Activated CD4-positive, alpha-beta memory T cell treated with anti-CD3 and anti-CD28 coated beads for 36 hours (primary cell): ENCODE measurements at regions of chr15 and their contacts with region 1.

Region 1: DNA sequence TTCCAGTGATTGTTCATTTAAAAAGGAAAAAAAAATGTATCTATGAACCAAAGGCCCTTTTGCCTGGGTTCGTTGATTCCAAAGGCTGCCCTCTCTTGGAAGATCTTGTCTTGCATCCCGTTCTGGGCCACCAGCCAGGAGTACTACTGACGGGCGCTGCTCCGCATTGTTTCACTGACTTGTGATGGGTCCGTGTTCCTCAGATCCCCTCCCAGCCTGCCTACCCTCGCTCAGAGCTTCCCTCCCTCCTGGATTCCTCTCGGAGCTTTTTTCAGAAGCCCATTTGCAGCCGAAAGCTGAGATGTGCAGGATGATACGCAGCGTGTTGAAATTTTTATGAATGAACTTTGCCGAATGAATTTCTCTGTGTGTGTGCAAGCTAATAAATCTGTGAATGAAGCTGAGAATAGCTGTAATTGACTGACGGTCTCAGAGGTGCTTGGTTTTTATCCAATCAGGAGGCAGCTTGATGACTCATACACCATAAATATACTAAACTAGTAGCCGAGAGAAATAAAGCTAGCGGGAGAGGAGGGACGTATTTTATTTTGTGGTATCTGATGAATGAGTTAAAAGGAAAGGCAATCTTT is at the start of gene SHC4:
- DNase-seq: no peak
- H3K4me3 Mint-ChIP-seq: peak within 1 kb of the TSS; percentile 61
- H3K27ac Mint-ChIP-seq: no peak within 1 kb of the TSS
- H3K4me1 Mint-ChIP-seq: peaks cover 32% of the 10 kb centered on the region
- H3K27me3 Mint-ChIP-seq: peaks cover 25% of the 10 kb centered on the region
- total RNA-seq, gene SHC4: 1.9 to 2.6 TPM

Region 2: GRCh38 chr15:48810414-48811317 is 153.0 kb before region 1 on chr15 and contains the start of gene CEP152:
- CTCF ChIA-PET with region 1: no interaction called
- POLR2A ChIA-PET with region 1: no interaction called
- intact Hi-C with region 1: loop called (anchors 1 kb)
- DNase-seq: peak; percentile 99
- H3K4me3 Mint-ChIP-seq: peak within 1 kb of the TSS; percentile 96
- H3K27ac Mint-ChIP-seq: peak within 1 kb of the TSS; percentile 95
- H3K4me1 Mint-ChIP-seq: peaks cover 36% of the 10 kb centered on the region
- H3K27me3 Mint-ChIP-seq: peaks cover 1% of the 10 kb centered on the region
- total RNA-seq, gene CEP152: 36.1 to 39.4 TPM

Region 3: DNA sequence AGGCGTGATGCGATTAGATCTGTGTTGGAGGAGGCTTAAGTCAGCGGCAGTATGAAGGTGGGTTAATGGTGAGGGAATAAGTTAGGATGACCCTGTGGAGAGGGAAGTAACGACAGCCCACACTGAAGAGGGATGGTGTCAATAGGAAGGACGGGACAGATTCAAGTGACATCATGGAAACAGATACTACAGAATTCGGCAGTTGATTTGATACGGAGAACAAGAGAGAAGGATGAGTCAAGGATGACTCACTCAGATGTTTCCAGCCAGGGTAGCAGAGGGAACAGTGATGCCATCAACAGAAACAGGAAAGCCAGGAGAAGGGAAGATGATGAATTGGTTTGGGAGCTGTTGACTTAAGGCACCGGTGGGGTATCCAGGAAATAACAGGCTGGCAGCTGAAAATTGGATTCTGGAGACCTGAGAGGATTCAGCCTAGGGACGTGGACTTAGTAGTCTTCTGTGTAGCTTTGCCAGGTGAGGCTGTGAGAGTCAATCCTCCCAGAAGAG is 37.9 kb before region 1 on chr15:
- CTCF ChIA-PET with region 1: interaction called, 3 read pairs
- POLR2A ChIA-PET with region 1: no interaction called
- intact Hi-C with region 1: loop called (anchors 1 kb)
- DNase-seq: peak; percentile 28
- H3K4me3 Mint-ChIP-seq: no peak overlapping the region
- H3K27ac Mint-ChIP-seq: peak overlapping the region; percentile 54
- H3K4me1 Mint-ChIP-seq: peaks cover 42% of the 10 kb centered on the region
- H3K27me3 Mint-ChIP-seq: peaks cover 12% of the 10 kb centered on the region

Region 4: DNA sequence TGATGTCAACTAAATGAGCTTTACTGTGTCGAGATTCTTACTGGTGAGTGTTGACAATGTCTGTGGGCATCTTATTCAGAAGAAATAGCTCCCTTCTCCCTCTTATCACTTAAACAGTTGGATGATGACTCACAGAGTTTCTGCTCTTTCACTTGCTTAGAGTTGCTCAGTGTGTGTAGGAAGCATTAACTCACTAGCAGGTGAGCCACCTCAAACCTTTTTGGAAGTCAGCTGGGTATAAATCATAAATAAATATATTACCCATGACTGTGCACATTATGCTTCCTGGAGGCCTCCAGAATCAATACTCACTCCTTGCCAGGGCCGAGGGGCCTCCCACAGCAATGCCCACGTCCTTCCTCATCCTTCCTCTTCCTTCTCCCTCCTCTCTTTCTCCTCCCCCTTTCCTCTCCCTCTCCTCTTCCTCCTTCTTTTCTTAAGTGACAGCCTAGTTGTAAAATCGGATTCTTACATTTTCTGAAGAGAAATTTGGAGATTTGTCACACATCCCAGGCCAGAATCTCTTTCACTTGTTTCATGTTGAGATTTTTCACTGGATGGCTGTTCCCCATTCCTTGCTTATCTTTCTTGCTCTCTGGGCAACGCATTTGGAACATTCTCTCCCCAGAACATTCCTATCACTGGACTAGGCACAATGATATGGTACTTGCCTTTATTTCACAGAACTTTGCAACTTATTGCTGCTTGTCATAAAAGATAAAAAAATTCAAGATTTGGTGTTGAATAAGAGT is 17.4 kb before region 1 on chr15:
- CTCF ChIA-PET with region 1: interaction called, 3 read pairs
- POLR2A ChIA-PET with region 1: interaction called, 3 read pairs
- intact Hi-C with region 1: loop called (anchors 2 kb)
- DNase-seq: no peak
- H3K4me3 Mint-ChIP-seq: no peak overlapping the region
- H3K27ac Mint-ChIP-seq: peak overlapping the region; percentile 11
- H3K4me1 Mint-ChIP-seq: peaks cover 14% of the 10 kb centered on the region
- H3K27me3 Mint-ChIP-seq: peaks cover 11% of the 10 kb centered on the region

Region 5: DNA sequence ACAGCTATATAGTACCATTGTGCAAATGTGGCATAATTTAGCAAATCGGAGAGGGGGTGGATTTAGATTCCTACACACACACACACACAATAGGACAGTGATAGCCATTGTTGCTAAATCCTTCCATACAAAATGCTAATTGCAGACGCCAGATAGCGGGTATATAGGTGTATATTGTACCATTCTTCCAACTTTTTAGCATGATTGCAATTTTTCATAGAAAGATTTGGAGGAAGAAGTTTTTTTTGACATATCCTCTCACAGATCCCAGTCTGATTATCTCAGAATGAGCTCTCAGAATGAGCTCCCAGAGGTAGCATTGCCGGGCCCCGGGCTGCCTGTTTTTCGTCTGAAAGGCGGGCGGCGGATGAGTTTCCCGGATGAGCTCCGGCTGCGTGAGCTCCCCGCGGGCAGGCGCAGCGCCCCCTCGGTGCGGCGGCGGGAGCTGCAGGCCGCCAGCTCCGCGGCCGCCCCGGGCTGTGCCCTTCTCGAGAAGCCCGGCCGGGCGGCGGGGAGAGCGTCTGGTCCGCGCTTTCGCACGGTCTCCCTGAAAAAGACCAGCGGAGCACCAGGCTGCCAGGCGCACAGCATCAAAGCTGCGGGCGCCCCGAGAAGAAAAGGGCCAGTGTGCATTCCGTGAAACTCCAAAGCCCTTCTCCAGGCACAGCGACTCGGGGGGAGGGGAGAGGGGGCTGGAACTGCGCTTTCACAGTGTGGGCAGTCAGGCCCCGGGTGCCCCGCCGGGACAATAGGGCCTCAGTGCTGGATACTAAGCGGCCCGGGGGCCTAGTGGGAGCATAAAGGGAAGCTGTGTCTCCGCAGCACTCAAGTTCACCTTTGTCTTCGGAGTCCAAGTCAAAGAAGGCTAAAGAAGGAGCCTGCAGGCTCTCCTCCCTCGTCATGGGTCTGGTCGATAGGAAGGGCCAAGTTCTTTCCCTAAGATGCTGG is 12.1 kb after region 1 on chr15:
- CTCF ChIA-PET with region 1: interaction called, 92 read pairs
- POLR2A ChIA-PET with region 1: interaction called, 3 read pairs
- intact Hi-C with region 1: no loop called
- DNase-seq: peak; percentile 83
- H3K4me3 Mint-ChIP-seq: peak overlapping the region; percentile 39
- H3K27ac Mint-ChIP-seq: no peak overlapping the region
- H3K4me1 Mint-ChIP-seq: no peaks in the 10 kb centered on the region
- H3K27me3 Mint-ChIP-seq: peaks cover 19% of the 10 kb centered on the region

Region 6: GRCh38 chr15:49038382-49038781 is 74.8 kb after region 1 on chr15:
- CTCF ChIA-PET with region 1: no interaction called
- POLR2A ChIA-PET with region 1: no interaction called
- intact Hi-C with region 1: no loop called
- DNase-seq: no peak
- H3K4me3 Mint-ChIP-seq: no peak overlapping the region
- H3K27ac Mint-ChIP-seq: no peak overlapping the region
- H3K4me1 Mint-ChIP-seq: peaks cover 35% of the 10 kb centered on the region
- H3K27me3 Mint-ChIP-seq: no peaks in the 10 kb centered on the region